Activated T-helper 2 cell treated with anti-CD3 and anti-CD28 coated beads, Interferon-gamma antibody, Interleukin-2, Interleukin-4, amounts not matched to agents 10 μg/mL and 5 μg/mL and 100 μg/mL, durations not matched to agents 14 hours and 24 hours and 36 hours (primary cell): ENCODE measurements at regions of chr7 and their contacts with region 1.

Region 1: GRCh38 chr7:604001-604883 is 84.6 kb upstream of the PDGFA start:
- DNase-seq: peak; percentile 91
- H3K4me3 Mint-ChIP-seq: peak overlapping the region; percentile 90
- H3K27ac Mint-ChIP-seq: peak overlapping the region; percentile 99
- H3K4me1 Mint-ChIP-seq: peaks cover 46% of the 10 kb centered on the region
- H3K27me3 Mint-ChIP-seq: no peaks in the 10 kb centered on the region

Region 2: GRCh38 chr7:518630-519483 is 85.4 kb before region 1 on chr7:
- intact Hi-C with region 1: loop called (anchors 2 kb)
- DNase-seq: peak; percentile 31
- H3K4me3 Mint-ChIP-seq: peak overlapping the region; percentile 85
- H3K27ac Mint-ChIP-seq: peak overlapping the region; percentile 33
- H3K4me1 Mint-ChIP-seq: peaks cover 10% of the 10 kb centered on the region
- H3K27me3 Mint-ChIP-seq: peaks cover 41% of the 10 kb centered on the region

Region 3: DNA sequence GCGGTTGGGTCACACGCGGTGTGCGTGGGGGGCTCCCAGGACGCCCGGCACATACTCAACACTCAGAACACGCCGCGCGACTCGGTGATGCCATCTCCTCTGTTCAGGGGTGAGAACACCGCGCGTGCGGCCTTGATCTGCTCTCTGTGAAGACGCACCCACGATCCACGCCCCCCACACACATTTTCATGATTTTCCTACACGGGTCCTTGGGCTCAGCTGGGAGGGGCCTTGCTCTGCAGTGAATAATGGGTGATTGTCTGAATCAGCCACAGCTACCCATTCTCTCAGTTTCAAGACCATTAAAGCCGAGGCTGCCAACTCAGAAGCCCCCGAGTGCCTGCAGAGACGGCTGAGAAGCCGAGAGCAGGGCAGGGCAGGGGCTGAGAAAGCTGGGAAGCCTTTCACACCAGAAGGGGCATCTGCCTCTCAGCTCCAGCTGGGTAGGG is 30.3 kb before region 1 on chr7:
- intact Hi-C with region 1: no loop called
- DNase-seq: no peak
- H3K4me3 Mint-ChIP-seq: no peak overlapping the region
- H3K27ac Mint-ChIP-seq: no peak overlapping the region
- H3K4me1 Mint-ChIP-seq: peaks cover 4% of the 10 kb centered on the region
- H3K27me3 Mint-ChIP-seq: no peaks in the 10 kb centered on the region

Region 4: DNA sequence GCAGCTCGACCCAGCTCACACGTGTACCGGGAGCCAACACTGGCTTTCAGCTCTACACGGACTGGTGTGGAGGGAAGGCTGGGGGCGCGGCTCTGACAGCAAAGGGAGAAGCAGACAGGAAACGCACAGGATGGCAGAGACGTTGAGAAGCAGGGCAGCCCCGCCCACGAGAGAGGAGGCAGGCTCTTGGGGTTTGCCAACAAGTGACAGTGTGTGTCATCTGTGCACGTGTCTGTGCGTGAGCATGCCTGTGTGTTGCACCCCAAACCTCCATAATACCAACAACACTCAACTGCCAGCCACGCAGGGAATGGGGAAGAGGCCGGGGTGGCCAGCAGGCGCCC is 20.1 kb before region 1 on chr7:
- intact Hi-C with region 1: loop called (anchors 1 kb)
- DNase-seq: peak; percentile 88
- H3K4me3 Mint-ChIP-seq: peak overlapping the region; percentile 85
- H3K27ac Mint-ChIP-seq: peak overlapping the region; percentile 95
- H3K4me1 Mint-ChIP-seq: peaks cover 33% of the 10 kb centered on the region
- H3K27me3 Mint-ChIP-seq: no peaks in the 10 kb centered on the region

Region 5: GRCh38 chr7:618539-619367 is 14.5 kb after region 1 on chr7:
- intact Hi-C with region 1: loop called (anchors 1 kb)
- DNase-seq: peak; percentile 70
- H3K4me3 Mint-ChIP-seq: peak overlapping the region; percentile 83
- H3K27ac Mint-ChIP-seq: peak overlapping the region; percentile 99
- H3K4me1 Mint-ChIP-seq: peaks cover 40% of the 10 kb centered on the region
- H3K27me3 Mint-ChIP-seq: no peaks in the 10 kb centered on the region

Region 6: GRCh38 chr7:726084-726853 is 122.0 kb after region 1 on chr7 and contains the start of gene DNAAF5:
- intact Hi-C with region 1: loop called (anchors 2 kb)
- DNase-seq: peak; percentile 85
- H3K4me3 Mint-ChIP-seq: peak within 1 kb of the TSS; percentile 92
- H3K27ac Mint-ChIP-seq: peak within 1 kb of the TSS; percentile 91
- H3K4me1 Mint-ChIP-seq: peaks cover 17% of the 10 kb centered on the region
- H3K27me3 Mint-ChIP-seq: no peaks in the 10 kb centered on the region
- total RNA-seq, gene DNAAF5: 41.5 and 41.7 TPM in 2 replicates

Region 7: DNA sequence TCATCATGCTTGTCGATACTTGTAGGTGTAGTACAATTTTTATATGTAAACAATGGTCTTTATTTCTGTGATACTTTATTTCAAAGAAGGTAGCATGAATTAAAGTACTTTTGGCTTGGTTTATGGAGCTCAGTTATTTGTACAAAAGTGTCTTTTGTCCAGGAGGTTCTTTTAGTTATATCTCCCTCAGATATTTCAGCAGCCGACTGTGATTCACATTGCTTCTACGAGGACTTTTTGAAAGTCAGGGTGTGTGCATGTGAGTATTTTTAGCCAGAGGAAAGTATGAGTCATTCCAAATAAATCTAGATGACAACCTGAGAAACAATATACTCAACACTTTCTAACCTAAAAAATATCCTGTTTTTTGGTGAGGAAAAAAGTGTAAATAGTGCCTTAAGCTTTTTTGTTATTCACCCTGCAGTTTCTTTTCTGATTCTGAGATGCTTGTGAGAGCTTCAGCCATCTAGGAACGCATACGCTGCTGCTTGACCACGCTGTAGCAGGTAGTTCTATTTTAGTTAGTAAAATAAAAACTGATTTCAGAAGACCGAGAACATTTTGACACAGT is 227.4 kb after region 1 on chr7:
- intact Hi-C with region 1: loop called (anchors 5 kb)
- DNase-seq: no peak
- H3K4me3 Mint-ChIP-seq: peak overlapping the region; percentile 69
- H3K27ac Mint-ChIP-seq: peak overlapping the region; percentile 93
- H3K4me1 Mint-ChIP-seq: peaks cover 30% of the 10 kb centered on the region
- H3K27me3 Mint-ChIP-seq: no peaks in the 10 kb centered on the region

Region 8: GRCh38 chr7:923108-924041 is 319.1 kb after region 1 on chr7:
- intact Hi-C with region 1: loop called (anchors 5 kb)
- DNase-seq: peak; percentile 92
- H3K4me3 Mint-ChIP-seq: peak overlapping the region; percentile 79
- H3K27ac Mint-ChIP-seq: peak overlapping the region; percentile 94
- H3K4me1 Mint-ChIP-seq: peaks cover 23% of the 10 kb centered on the region
- H3K27me3 Mint-ChIP-seq: no peaks in the 10 kb centered on the region